ENCODE measurements at regions of chr20 and their contacts with region 1.

Region 1: DNA sequence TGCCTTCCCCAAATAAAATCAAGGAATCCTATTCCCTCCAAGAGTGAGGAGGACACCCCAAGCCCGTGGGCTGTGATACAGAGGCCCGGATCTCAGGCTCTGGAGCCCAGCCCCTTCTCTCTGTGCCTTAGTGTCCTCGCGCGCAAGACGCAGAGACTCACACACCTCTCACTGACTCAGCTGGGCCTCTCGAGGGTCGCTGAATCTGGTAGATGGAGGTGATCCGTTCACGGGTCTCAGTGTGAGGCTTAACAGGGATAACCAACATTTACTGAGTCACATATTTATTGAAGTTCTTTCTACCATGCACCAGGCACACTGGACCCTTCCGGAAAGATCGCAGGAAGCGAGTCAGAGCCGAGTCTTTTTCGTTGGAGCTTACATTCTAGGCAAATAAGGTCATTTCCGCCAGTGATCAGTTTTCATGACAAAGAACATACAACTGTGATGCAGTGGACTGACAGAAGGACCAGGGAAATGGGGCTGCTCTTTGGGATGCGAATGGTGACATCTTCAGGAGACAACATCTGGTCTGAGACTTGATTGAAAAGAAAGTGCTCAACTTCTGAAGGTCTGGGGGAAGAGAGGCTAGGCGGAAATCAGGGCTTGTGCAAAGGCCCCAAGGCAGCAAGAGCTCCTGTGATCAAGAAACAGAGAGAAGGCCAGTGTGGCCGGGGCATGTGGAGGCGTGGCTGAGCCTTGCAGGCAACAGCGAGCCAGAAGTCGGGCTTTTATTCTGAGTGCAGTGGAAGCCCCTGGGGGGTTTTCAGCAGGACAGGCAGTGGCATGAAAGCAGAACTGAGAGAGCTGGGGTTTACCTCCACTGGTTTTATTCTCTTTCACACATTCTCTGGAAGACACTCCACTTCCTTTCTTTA is 56.8 kb downstream of the APCDD1L start:
- DNase-seq: no peak
- ATAC-seq: no peak
- H3K4me3 ChIP-seq: no peak overlapping the region
- H3K27ac ChIP-seq: no peak overlapping the region
- H3K4me1 ChIP-seq: no peaks in the 10 kb centered on the region
- H3K27me3 ChIP-seq: no peaks in the 10 kb centered on the region

Region 2: GRCh38 chr20:58209652-58210397 is 248.6 kb before region 1 on chr20:
- intact Hi-C with region 1: no loop called
- DNase-seq: peak; percentile 81 to 94 (median 93)
- ATAC-seq: peak; percentile 84 to 85
- H3K4me3 ChIP-seq: no peak overlapping the region
- H3K27ac ChIP-seq: no peak overlapping the region
- H3K4me1 ChIP-seq: no peaks in the 10 kb centered on the region
- H3K27me3 ChIP-seq: no peaks in the 10 kb centered on the region

Region 3: GRCh38 chr20:58515233-58516184 is 57.1 kb after region 1 on chr20 and contains the start of gene APCDD1L:
- intact Hi-C with region 1: loop called in 1 of 4 experiments (anchors 10 kb)
- DNase-seq: peak in 1 of 3 donors; percentile 58
- ATAC-seq: peak; percentile 14 to 55
- H3K4me3 ChIP-seq: no peak within 1 kb of the TSS
- H3K27ac ChIP-seq: no peak within 1 kb of the TSS
- H3K4me1 ChIP-seq: no peaks in the 10 kb centered on the region
- H3K27me3 ChIP-seq: no peaks in the 10 kb centered on the region
- total RNA-seq, gene APCDD1L: 0.65 to 4.3 (median 1.6) TPM

Region 4: DNA sequence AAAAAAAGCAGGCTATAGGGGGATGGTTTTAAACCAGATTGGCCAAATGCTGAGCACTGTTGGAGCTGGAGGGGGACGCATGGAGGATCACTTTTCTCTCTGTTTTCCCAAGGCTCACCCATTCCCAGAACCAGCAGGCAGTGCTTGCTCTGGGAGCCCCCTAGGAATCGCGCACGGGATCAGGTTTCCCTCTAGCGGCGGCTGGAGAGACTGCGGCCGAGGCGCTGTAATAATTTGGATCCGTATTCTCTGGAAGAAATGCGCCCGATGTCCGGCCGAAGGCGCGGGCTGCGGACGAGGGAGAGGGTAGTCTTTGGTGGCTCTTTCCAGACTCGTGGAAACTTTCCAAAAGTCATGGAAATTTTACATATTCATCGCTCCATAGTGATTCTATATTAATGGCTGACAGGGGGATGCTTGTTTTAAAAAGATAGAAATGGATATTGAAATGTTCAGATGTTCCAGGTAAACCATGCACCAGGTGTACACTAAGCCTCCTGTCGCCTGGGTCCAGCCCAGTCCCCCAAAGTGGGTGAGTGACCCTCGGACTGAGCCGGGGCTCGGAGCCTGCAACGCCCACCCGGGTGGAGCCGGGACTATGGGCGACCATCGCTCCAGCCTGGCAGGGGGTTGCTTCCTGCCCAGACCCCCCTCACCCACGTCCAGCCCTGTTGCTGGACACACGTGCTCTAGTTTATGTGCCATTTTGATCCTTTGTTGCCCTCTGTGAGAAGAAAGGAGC is 1067.3 kb after region 1 on chr20:
- intact Hi-C with region 1: no loop called
- DNase-seq: peak; percentile 55 to 83 (median 80)
- ATAC-seq: peak; percentile 62 to 82
- H3K4me3 ChIP-seq: no peak overlapping the region
- H3K27ac ChIP-seq: no peak overlapping the region
- H3K4me1 ChIP-seq: no peaks in the 10 kb centered on the region
- H3K27me3 ChIP-seq: no peaks in the 10 kb centered on the region